GM13976 (cell line): ENCODE measurements at regions of chr4 and their contacts with region 1.

Region 1: DNA sequence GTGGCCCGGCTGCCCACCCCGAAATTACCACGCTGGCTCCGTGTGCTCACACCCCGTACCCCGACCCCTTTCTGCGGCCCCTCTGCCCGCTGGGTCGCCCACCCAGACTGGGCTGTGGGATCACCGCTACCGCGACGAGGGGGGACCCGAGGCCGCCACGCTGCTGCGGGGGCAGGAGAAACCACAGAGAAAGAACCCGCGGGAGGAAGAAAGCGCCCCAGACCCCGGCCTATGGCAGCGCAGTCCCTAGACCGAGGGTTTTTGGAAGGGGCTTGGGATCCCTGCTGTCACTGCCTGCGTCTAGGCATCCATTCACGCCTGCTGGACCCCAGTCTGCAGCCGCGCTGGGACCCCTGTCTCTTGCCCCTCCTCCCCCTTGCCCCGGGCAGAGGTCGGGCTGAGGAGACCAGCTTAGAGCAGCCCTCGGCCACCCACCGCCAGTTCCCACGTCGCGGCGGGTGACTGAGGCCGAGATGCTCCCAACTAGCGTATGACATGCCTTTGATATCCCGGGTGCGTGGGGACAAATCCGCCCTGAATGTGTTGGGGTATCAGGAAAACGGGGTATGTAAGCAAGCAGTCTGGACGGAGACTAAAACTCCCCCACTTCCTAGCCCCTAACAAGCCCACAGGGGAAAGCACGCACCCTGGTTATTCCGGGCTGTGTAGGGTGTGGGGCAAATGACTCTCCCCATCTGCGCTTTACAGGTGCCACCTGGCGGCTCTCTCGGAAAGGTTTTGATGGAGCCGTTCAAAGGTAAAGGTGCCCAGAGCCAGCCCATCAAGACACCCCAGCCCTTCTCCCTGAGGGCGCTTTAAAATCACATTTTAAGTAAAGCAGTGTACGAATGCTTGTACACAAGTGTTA is 862 bp upstream of the INPP4B start:
- DNase-seq: peak; percentile 34
- CTCF ChIP-seq: no peak

Region 2: GRCh38 chr4:142353149-142353738 is 493.7 kb before region 1 on chr4:
- in situ Hi-C with region 1: loop called (anchors 25 kb)
- DNase-seq: no peak
- CTCF ChIP-seq: peak; percentile 74

Region 3: GRCh38 chr4:143389579-143390195 is 542.7 kb after region 1 on chr4:
- in situ Hi-C with region 1: no loop called
- DNase-seq: no peak
- CTCF ChIP-seq: no peak

Region 4: DNA sequence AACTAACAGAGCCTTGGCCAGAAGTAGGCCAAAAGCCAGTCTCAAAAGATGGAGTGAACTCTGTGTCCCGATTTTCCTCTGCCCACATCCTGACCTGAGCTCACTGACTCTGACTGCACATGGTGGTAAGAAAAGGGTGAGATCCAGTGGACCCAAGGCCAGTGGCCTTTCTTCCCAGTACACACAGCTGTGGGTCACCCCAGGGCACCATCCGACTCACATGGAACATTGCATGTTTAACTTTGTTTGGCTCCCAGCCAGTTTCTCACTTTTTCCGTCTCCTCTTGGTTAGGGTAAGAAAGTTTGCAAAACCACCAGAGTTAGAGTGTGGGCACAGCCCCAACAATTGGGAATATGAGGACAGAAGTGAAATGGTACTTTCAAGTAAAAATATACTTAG is 559.6 kb after region 1 on chr4:
- in situ Hi-C with region 1: no loop called
- DNase-seq: no peak
- CTCF ChIP-seq: no peak